Sciatic nerve (tissue), 2 donors: ENCODE measurements at regions of chr22 and their contacts with region 1.

Region 1: GRCh38 chr22:39543095-39543494 is 10.5 kb upstream of the RPS19BP1 start:
- DNase-seq: no peak
- ATAC-seq: no peak

Region 2: GRCh38 chr22:39574779-39575551 is 31.9 kb after region 1 on chr22:
- intact Hi-C with region 1: no loop called
- DNase-seq: no peak
- ATAC-seq: peak; percentile 13

Region 3: DNA sequence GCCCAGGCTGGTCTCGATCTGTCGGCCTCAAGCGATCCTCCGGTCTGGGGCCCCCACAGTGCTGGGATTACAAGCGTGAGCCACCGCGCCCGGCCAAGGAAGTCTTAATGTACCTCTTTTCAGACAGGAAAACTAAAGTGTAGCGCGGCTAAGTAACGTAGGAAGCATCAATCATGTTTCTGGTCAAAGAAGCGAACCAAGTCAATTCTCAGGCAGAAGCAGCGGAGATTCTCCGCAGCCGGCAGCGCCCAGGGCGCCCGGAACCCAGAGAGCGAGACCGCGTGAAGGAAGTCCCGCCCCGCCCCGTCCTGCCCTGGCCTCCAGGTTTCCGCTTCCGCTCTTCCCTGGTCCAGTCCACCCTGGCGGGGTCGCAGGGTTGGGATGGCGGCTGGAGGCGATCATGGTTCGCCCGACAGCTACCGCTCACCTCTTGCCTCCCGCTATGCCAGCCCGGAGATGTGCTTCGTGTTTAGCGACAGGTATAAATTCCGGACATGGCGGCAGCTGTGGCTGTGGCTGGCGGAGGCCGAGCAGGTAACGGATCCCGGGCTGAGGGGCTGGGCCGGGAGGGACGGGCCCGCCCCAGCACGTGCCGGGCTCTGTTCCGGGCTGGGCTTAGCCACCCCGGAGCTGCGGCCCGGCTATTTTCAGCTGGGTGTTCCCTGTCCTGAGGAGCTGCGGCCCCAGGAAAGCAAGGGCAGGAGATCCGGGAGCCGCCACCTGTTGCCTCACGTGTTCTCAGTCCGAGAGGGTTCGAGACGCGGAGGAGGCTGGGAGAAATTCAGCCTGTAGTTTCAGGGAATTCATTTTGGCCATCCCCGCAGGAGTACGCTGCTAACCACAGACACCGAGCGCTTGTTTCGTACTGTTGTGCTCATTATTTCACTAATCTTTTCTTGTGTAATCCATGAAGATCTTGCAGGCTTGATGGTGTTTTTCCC is 803.4 kb after region 1 on chr22 and contains the start of gene ADSL:
- intact Hi-C with region 1: loop called (anchors 10 kb)
- DNase-seq: peak; percentile 93
- ATAC-seq: peak; percentile 99
- total RNA-seq, gene ADSL: 32.8 TPM